ENCODE measurements at regions of chr10 and their contacts with region 1.

Region 1: DNA sequence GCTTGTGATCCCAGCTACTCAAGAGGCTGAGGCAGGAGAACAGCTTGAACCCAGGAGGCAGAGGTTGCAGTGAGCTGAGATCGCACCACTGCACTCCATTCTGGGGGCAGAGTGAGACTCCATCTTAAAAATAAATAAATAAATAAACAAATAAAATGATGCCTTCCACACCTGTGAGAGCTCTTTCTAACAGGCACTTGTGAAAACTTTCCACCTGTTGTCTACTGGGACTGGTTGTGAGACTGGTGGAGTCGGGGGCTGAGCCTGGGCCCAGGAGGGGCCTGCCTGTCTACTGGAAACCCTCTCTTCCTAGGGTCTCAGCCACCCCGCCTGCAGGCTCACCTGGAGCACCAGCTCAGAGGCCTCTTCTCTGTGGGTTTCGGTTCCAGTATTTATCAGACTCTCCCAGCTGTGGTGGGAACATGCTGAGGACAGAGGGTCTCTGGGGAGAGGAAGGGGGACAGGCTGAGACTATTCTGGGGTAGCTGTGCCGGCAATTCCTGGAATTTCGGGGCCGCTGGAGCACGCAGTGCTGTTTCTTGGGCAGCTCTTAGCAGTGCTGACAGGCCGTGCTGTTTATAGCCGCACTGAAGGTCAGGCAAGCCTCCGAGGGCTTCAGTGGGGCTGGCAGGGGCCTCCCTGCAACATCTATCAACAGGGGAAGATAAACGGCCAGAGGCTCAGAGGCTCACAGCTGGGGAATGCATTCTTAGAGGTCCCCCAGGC is 3.8 kb downstream of the LDB3 start:
- DNase-seq: no peak
- ATAC-seq: peak; percentile 33
- H3K4me3 Mint-ChIP-seq: no peak overlapping the region
- H3K27ac Mint-ChIP-seq: peak overlapping the region; percentile 76
- H3K4me1 Mint-ChIP-seq: peaks cover 49% of the 10 kb centered on the region
- H3K27me3 Mint-ChIP-seq: no peaks in the 10 kb centered on the region
- CTCF ChIP-seq: no peak

Region 2: GRCh38 chr10:86644152-86644793 is 27.9 kb before region 1 on chr10:
- CTCF ChIA-PET with region 1: no interaction called
- POLR2A ChIA-PET with region 1: no interaction called
- DNase-seq: no peak
- ATAC-seq: peak; percentile 73
- H3K4me3 Mint-ChIP-seq: no peak overlapping the region
- H3K27ac Mint-ChIP-seq: no peak overlapping the region
- H3K4me1 Mint-ChIP-seq: peaks cover 6% of the 10 kb centered on the region
- H3K27me3 Mint-ChIP-seq: no peaks in the 10 kb centered on the region
- CTCF ChIP-seq: no peak

Region 3: DNA sequence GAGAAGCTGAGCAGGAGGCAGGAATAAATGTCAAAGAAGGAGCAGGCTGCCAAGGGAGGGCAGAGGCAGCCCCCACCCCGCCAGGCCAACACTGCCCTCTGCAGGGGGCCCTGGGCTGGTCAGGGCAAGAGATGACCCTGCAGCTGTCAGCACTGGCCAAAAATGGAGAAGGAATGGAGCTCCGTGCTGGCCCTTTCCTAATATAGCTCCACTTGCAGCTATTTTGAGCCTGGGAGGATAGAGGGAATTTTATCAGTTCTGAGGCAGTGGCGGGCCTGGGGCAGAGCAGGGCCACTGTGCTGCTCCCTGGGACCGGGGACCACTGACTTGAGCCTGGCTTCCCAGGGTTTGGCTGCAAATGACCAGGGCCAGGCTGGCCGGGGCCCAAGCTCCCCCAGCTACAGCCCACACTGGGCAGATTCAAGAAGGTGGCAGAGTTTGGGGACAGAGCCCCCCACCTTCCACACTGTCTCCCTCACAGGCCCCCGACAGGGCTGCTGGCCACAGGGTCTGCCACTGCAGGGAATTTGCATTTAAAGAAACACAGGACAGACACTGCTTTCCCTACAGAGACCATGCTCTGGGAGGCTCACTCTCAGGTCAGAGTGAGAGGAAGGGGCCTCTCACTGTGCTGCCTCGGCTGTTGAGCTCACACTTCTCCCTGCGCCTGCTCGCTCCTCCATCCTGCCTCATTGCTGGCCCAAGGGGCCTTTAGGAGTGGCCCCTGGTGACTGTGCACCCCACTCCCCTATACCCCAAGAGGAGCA is 12.4 kb after region 1 on chr10:
- CTCF ChIA-PET with region 1: interaction called, 19 read pairs
- POLR2A ChIA-PET with region 1: no interaction called
- DNase-seq: peak; percentile 59
- ATAC-seq: peak; percentile 32
- H3K4me3 Mint-ChIP-seq: no peak overlapping the region
- H3K27ac Mint-ChIP-seq: no peak overlapping the region
- H3K4me1 Mint-ChIP-seq: peaks cover 33% of the 10 kb centered on the region
- H3K27me3 Mint-ChIP-seq: no peaks in the 10 kb centered on the region
- CTCF ChIP-seq: no peak; the same call in 1 of the 2 replicates